Activated B cell treated with CpG ODN at 0.5 μM for 24 hours (primary cell): ENCODE measurements at regions of chr1 and their contacts with region 1.

Region 1: GRCh38 chr1:119008483-119009311 is 20.6 kb upstream of the TBX15 start:
- DNase-seq: no peak
- ATAC-seq: no peak
- H3K4me3 Mint-ChIP-seq: peak overlapping the region; percentile 72
- H3K27ac Mint-ChIP-seq: peak overlapping the region; percentile 24
- H3K4me1 Mint-ChIP-seq: peaks cover 13% of the 10 kb centered on the region
- H3K27me3 Mint-ChIP-seq: peaks cover 48% of the 10 kb centered on the region
- CTCF ChIP-seq: no peak

Region 2: GRCh38 chr1:118151312-118151937 is 857.3 kb before region 1 on chr1:
- CTCF ChIA-PET with region 1: interaction called, 19 read pairs
- POLR2A ChIA-PET with region 1: no interaction called
- intact Hi-C with region 1: no loop called
- DNase-seq: no peak
- ATAC-seq: no peak
- H3K4me3 Mint-ChIP-seq: no peak overlapping the region
- H3K27ac Mint-ChIP-seq: no peak overlapping the region
- H3K4me1 Mint-ChIP-seq: no peaks in the 10 kb centered on the region
- H3K27me3 Mint-ChIP-seq: no peaks in the 10 kb centered on the region
- CTCF ChIP-seq: no peak

Region 3: GRCh38 chr1:118987468-118988185 is 21.1 kb before region 1 on chr1:
- CTCF ChIA-PET with region 1: interaction called, 8 read pairs
- POLR2A ChIA-PET with region 1: no interaction called
- intact Hi-C with region 1: loop called (anchors 1 kb)
- DNase-seq: no peak
- ATAC-seq: no peak
- H3K4me3 Mint-ChIP-seq: peak overlapping the region; percentile 55
- H3K27ac Mint-ChIP-seq: peak overlapping the region; percentile 4
- H3K4me1 Mint-ChIP-seq: peaks cover 33% of the 10 kb centered on the region
- H3K27me3 Mint-ChIP-seq: peaks cover 87% of the 10 kb centered on the region
- CTCF ChIP-seq: no peak